Mammary epithelial cell (primary cell): ENCODE measurements at regions of chr11 and their contacts with region 1.

Region 1: DNA sequence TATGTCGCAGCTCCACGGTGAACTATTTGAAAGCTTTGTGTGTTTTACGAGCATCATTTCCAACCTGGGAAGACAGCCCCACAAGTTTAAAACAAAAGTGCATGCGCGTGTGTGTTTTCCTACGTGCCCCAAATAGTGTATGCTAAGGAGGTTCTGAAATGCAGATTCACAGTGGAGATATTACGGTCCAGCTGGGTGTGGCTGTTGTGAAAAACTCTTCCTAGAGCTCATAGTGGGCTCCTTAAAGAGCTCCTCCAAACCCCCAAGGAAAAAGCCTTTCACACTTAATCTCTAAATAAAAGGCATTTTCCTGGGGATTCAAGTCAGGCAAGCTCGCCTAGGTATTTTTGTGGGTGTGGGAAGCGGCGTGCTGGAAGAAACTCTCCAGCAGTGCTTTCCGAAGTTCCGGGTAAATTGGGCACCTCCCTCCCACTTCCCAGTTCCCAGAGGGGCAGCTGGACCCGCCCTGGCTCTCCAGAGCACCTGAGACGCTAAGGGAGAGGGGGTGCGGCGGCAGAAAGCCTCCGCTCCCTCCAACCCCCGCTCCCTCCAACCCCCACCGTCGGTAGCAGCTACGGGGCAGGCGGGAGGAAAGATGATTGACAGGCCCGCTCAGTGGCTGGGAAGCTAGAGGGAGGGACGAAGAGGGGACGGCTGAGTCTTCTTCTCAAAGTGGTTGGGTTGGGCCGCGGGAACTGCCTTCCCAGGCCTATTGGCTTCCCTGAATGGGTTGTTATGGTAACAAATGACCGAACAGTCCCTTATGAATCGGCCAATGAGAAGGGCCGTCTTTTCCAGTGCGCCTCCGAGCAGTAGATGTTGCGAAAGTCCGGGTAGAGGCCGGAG is 558 bp upstream of the PCF11 start:
- DNase-seq: peak; percentile 100
- H3K4me3 ChIP-seq: peak overlapping the region; percentile 51 to 89 (median 76)
- H3K27ac ChIP-seq: peak overlapping the region; percentile 91
- H3K4me1 ChIP-seq: peaks cover 22% of the 10 kb centered on the region
- H3K27me3 ChIP-seq: no peaks in the 10 kb centered on the region
- CTCF ChIP-seq: no peak

Region 2: DNA sequence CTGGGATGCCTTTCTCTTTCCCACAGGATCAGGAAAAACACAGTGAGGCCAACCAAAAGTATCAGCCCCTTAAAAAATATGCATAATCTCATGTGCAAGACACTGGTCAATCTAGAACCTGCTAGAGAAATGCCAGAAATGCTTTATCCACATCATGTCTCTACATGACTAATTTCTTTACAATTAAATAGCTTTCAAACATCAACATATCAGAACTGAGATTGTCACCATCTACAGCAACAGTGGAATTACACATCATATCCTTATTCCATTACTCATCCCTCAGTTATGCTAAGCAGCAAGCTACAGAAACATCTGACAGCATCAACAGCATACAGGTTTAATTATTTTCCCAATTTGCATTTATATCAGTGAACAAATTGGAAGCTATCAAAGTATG is 176.1 kb before region 1 on chr11:
- CTCF ChIA-PET with region 1: no interaction called
- dilution Hi-C with region 1: no loop called
- in situ Hi-C with region 1: no loop called
- intact Hi-C with region 1: loop called (anchors 2 kb)
- DNase-seq: peak; percentile 80
- H3K4me3 ChIP-seq: no peak overlapping the region
- H3K27ac ChIP-seq: peak overlapping the region; percentile 75
- H3K4me1 ChIP-seq: peaks cover 28% of the 10 kb centered on the region
- H3K27me3 ChIP-seq: no peaks in the 10 kb centered on the region
- CTCF ChIP-seq: no peak

Region 3: DNA sequence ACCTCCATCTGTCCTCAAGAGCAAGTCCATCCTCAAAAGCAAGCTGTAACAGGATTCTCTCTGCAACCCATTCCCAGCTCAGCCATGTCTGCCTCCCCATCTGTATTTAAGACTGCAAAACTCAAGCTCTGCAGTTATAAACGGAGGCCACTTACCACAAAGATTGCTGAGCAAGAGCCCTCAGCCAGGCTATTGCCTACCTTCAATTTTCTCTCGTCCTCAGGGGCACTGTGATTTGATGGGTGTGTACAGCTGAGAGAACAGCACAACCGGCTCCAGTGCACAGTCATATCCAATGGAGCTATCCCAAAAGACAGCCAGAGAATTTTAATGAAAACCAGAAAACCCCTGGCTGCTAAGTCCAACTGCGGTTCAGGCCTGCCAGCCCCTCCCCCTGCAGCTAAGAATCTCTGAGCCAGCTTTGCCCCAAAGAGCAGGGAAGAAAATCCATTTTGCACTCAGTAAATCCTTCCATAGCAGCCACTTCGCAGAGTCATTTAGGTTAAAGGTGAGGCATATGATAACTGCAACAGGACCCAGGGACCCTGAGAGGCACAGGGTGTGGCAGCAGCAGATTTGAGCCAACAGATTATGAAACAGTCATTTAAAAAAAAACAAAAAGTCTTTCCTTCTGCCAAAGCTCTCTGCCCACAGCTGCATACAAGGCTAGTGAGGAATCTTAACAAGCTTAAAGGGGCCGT is 122.3 kb before region 1 on chr11:
- CTCF ChIA-PET with region 1: no interaction called
- dilution Hi-C with region 1: no loop called
- in situ Hi-C with region 1: no loop called
- intact Hi-C with region 1: no loop called
- DNase-seq: peak; percentile 43
- H3K4me3 ChIP-seq: peak overlapping the region in 1 of 3 experiments; percentile 34
- H3K27ac ChIP-seq: peak overlapping the region; percentile 5
- H3K4me1 ChIP-seq: peaks cover 26% of the 10 kb centered on the region
- H3K27me3 ChIP-seq: no peaks in the 10 kb centered on the region
- CTCF ChIP-seq: no peak

Region 4: DNA sequence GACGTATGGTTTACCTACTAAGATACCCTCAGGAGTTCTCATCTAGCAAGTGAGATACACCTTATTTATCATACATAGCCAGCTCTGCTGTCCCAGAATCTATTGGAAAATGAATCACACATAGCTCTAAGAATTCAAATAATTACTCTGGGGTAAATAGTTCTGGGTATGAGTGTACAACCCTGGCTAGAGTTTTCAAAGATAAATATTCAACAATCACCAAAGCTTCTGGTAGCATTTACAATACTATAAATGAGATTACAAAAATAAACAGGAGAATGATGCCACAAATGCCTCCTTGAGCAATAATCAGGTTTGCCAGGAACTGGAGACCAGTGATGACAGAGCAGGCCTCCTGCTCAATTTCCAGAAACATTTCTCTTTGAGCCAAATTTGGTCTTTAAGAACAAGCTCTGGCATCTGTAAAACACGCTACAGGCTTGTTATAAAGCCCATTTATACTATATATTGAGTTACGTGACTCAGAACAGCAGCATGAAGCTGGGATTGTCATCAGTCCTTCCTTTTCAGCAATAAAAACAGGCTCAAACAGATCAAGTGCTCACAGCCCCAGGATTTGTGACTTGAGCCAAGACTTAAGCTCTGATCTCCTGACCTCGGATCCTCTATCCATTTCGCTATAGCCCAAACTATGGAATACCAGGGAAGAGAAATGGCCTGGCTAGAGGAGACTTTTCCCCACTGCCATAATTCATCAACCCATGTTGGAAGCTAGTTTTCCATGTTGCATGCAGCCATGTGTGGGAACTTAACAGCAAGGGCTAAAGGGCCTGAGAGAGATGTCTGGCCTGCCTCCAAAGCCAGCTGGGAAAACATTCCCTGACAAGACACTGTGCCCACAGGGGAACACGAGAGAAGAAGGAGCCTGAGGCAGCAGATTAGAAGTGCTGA is 104.4 kb before region 1 on chr11:
- CTCF ChIA-PET with region 1: no interaction called
- dilution Hi-C with region 1: no loop called
- in situ Hi-C with region 1: no loop called
- intact Hi-C with region 1: loop called (anchors 1 kb)
- DNase-seq: peak; percentile 81
- H3K4me3 ChIP-seq: no peak overlapping the region
- H3K27ac ChIP-seq: peak overlapping the region; percentile 60
- H3K4me1 ChIP-seq: peaks cover 39% of the 10 kb centered on the region
- H3K27me3 ChIP-seq: no peaks in the 10 kb centered on the region
- CTCF ChIP-seq: no peak

Region 5: DNA sequence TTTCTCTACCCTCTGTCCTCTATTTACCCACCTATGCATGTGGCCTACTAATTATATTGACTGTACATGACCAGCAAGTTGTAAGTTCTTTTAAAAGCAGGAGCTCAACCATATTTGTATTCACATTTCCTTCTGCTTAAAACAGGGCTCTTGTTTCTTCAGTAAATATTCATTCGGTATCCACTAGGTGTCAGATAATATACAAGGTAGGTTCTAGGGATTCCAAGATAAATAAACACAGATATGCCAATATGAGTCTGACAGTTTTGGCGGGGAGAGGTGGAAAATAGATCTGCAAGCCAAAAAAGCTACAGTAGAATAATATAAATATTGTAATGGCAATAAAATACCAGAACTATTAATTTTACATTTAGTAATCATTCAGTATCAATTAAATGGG is 69.3 kb before region 1 on chr11:
- CTCF ChIA-PET with region 1: no interaction called
- dilution Hi-C with region 1: no loop called
- in situ Hi-C with region 1: no loop called
- intact Hi-C with region 1: loop called (anchors 1 kb)
- DNase-seq: no peak
- H3K4me3 ChIP-seq: no peak overlapping the region
- H3K27ac ChIP-seq: no peak overlapping the region
- H3K4me1 ChIP-seq: no peaks in the 10 kb centered on the region
- H3K27me3 ChIP-seq: no peaks in the 10 kb centered on the region
- CTCF ChIP-seq: peak in 1 of 2 donors; percentile 38

Region 6: GRCh38 chr11:83140696-83141455 is 15.5 kb before region 1 on chr11:
- CTCF ChIA-PET with region 1: no interaction called
- dilution Hi-C with region 1: no loop called
- in situ Hi-C with region 1: no loop called
- intact Hi-C with region 1: no loop called
- DNase-seq: no peak
- H3K4me3 ChIP-seq: no peak overlapping the region
- H3K27ac ChIP-seq: no peak overlapping the region
- H3K4me1 ChIP-seq: no peaks in the 10 kb centered on the region
- H3K27me3 ChIP-seq: no peaks in the 10 kb centered on the region
- CTCF ChIP-seq: no peak

Region 7: DNA sequence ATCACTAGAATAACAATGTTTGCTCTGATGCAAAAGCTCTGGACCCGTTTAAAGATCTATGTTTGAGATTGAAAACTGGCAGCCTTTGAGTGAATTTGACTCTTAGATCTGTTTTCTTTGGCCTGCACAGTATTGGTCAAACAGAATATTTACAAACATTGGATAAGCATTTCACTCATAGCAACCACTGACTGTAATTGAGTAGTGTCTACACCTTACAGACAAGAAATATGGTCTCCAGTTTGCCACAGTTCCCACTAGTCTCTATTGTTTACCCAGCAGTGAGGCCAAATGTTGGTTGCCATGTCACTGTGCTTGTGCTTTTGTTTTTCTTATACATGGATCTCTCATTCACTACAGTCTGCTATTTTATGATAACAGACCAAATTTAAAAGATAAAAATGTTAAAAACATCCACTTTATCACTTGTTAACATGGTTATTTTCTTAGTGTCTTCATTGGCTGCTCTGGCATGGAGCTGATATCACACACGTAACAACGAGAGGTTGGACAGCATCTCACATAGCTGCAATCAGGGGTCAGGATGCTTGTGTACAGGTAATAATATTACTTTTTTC is 49.3 kb after region 1 on chr11:
- CTCF ChIA-PET with region 1: no interaction called
- dilution Hi-C with region 1: no loop called
- in situ Hi-C with region 1: no loop called
- intact Hi-C with region 1: no loop called
- DNase-seq: no peak
- H3K4me3 ChIP-seq: no peak overlapping the region
- H3K27ac ChIP-seq: no peak overlapping the region
- H3K4me1 ChIP-seq: no peaks in the 10 kb centered on the region
- H3K27me3 ChIP-seq: no peaks in the 10 kb centered on the region
- CTCF ChIP-seq: no peak

Region 8: GRCh38 chr11:84564180-84564866 is 1408.0 kb after region 1 on chr11:
- CTCF ChIA-PET with region 1: interaction called, 29 read pairs
- dilution Hi-C with region 1: no loop called
- in situ Hi-C with region 1: no loop called
- intact Hi-C with region 1: no loop called
- DNase-seq: peak; percentile 32
- H3K4me3 ChIP-seq: no peak overlapping the region
- H3K27ac ChIP-seq: no peak overlapping the region
- H3K4me1 ChIP-seq: no peaks in the 10 kb centered on the region
- H3K27me3 ChIP-seq: peaks cover 2% of the 10 kb centered on the region
- CTCF ChIP-seq: peak; percentile 82 to 83